ENCODE measurements at regions of chrX and their contacts with region 1.

Region 1: DNA sequence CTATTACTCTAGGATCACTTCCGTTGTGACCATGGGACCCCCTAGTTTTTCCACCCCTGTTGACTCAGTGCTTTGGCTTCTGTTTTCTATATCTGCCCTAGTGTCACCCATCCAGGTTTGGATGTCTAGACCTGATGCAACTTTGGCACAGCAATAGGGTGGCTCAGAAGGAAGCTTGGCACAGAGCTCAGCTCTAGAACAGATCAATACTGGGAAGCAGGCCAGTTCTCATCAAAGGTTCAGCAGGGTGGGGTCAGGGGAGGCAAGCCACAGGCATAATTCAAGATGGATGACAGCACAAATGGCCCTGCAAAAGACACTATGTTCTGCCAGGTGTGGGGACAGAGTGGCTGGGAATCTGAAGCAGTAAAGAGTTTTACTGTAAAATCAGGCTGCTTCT is 74.2 kb upstream of the EGFL6 start:
- DNase-seq: peak in 3 of 6 donors; percentile 27 to 67 (median 40)
- ATAC-seq: peak; percentile 56 to 90 (median 80)
- H3K4me3 ChIP-seq: no peak overlapping the region
- H3K27ac ChIP-seq: no peak overlapping the region
- H3K4me1 ChIP-seq: no peaks in the 10 kb centered on the region
- H3K27me3 ChIP-seq: peaks cover 0 to 16% (median 0%) of the 10 kb centered on the region in 4 donors
- CTCF ChIP-seq: no peak

Region 2: DNA sequence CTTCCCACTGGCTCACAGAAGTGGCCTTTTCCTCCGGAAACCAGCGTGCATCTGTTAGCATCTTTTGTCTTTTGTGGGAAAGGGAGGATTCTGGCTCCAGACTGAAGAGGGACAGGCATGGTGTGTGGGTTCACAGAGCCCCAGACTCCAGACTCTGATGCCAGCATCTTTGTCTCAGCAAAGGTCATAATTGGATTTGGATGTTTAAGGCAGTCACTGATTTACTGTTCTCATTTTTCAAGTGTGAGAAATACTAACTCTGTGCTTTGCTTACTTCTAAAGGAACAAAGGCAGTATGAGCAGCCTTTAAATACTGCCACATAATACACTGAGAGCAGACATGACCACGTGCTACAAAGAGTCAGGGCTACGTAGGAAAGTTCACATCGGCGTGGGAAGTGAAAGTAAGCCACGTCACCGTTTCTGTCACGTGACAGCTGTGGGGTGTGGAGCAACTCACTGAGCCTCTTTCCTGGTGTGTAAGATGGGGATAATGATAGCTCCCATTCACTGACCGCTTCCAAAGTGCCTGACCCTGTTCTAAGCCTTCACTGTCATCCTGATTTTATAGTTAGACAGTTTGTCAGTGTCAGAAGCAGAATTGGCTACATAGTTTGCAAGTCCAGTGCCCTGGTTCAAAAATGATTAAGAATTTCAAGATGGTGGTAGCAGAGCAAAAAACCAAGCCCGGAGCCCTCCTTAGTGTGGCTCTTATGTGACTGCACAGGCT is 545.1 kb before region 1 on chrX:
- intact Hi-C with region 1: loop called in 1 of 3 experiments (anchors 10 kb)
- DNase-seq: peak in 4 of 6 donors; percentile 53 to 68 (median 61)
- ATAC-seq: peak; percentile 60 to 81 (median 71)
- H3K4me3 ChIP-seq: no peak overlapping the region
- H3K27ac ChIP-seq: peak overlapping the region in 2 of 4 donors; percentile 38 to 54
- H3K4me1 ChIP-seq: peaks cover 9 to 16% (median 16%) of the 10 kb centered on the region in 3 donors
- H3K27me3 ChIP-seq: no peaks in the 10 kb centered on the region
- CTCF ChIP-seq: no peak

Region 3: GRCh38 chrX:12974796-12975669 is 520.2 kb before region 1 on chrX and contains the start of gene TMSB4X:
- intact Hi-C with region 1: no loop called
- DNase-seq: peak; percentile 79 to 94 (median 86)
- ATAC-seq: peak; percentile 74 to 85 (median 81)
- H3K4me3 ChIP-seq: peak within 1 kb of the TSS; percentile 31 to 75 (median 60)
- H3K27ac ChIP-seq: peak within 1 kb of the TSS; percentile 67 to 96 (median 90)
- H3K4me1 ChIP-seq: peaks cover 0 to 14% (median 0%) of the 10 kb centered on the region in 3 donors
- H3K27me3 ChIP-seq: peaks cover 0 to 3% (median 0%) of the 10 kb centered on the region in 4 donors
- CTCF ChIP-seq: no peak
- total RNA-seq, gene TMSB4X: 460 to 1,697 (median 685) TPM

Measured in pancreas (tissue), 10 donors.